Lower leg skin (tissue), 4 donors: ENCODE measurements at regions of chr11 and their contacts with region 1.

Region 1: GRCh38 chr11:93548679-93549319 is 5.6 kb upstream of the SMCO4 start:
- DNase-seq: no peak
- H3K4me3 ChIP-seq: no peak overlapping the region
- CTCF ChIP-seq: no peak
- POLR2A ChIP-seq: no peak

Region 2: DNA sequence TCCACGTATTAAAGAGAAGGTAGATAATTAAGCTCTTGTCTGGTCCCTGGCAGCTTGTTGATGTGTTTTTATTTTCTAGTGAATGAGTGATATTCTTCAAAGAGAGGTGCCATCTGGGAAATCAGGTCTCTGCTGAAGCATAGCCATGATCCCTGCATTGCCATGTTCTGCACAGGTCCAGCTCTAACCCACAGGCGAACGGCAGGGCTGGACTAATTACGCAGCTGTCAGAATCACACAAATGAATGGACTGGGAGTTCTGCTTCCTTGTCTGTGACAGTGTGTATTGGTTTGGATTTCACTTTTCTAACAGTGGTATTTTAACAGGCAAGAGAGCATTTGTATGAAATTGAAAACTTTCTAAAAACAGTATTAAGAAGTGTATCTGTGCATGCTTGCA is 1088.6 kb before region 1 on chr11:
- intact Hi-C with region 1: loop called (anchors 5 kb)
- DNase-seq: no peak
- H3K4me3 ChIP-seq: no peak overlapping the region
- CTCF ChIP-seq: no peak
- POLR2A ChIP-seq: no peak

Region 3: DNA sequence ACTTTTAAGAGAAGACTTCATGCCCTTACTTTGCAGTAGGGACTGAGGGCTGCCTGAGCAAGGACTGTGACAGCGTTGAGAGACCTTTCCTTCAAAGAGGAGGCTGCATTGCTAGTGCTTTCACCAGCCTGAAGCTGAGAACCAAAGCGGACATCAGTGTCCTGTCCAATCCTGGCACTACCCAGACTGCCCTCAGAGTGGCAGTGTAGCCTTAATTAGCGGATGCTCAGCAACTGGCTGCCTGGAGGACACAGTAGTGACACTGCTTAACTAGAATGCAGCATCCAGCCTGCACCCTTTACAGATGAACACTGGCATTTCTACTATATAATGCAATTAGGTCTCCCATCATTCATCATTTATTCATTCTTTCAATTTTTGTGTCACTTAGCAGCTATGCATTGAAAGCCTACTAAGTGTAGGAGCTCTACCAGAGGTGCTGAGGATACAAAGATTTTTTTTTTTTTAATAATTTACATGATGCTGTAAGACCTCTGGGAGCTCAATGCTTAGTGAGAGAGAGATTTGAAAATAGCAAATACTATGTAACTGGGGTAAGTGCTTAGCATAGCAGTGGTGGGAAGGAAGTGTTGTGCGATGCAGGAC is 314.1 kb before region 1 on chr11:
- intact Hi-C with region 1: loop called (anchors 5 kb)
- DNase-seq: peak; percentile 73 to 93
- H3K4me3 ChIP-seq: no peak overlapping the region
- CTCF ChIP-seq: peak in 1 of 3 donors; percentile 63
- POLR2A ChIP-seq: no peak

Region 4: DNA sequence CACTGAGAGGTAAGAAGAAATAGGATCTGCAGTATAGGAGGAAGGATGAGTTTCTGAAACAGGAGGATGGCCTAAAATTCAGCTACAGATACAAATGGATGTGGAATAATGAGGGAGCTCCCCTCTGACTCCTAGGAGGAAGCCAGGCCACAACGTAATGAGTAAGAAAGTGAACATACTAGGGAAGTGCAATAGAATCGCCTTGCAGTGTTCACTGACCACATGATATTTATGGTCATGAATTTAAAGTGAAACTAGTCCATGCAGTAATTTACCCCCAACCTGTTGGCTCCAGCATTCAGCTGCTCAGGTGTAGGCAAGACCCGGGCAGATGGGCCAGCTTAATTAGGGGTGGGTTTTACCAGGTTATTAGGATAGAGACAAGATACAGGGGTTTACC is 116.6 kb before region 1 on chr11:
- intact Hi-C with region 1: no loop called
- DNase-seq: no peak
- H3K4me3 ChIP-seq: no peak overlapping the region
- CTCF ChIP-seq: no peak
- POLR2A ChIP-seq: no peak

Region 5: DNA sequence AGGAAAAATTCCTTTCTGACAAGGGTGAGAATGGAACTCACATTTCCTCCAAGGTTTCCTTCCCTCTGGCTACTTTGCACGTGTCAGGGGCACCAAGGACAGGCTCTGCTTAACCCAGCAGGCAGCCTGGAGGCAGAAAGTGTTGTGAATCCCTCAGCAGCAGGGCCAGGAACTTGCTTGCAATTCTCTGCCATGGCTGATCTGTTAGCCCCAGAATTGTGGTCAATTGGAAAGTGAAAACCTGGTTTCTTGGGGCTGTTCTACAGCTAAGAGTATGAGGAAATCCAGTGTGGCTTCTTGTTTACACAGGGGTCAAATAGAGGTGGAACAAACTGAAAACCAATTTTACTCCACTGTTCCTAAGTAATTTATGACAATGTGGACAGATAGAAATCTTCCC is 74.4 kb after region 1 on chr11:
- intact Hi-C with region 1: no loop called
- DNase-seq: no peak
- H3K4me3 ChIP-seq: no peak overlapping the region
- CTCF ChIP-seq: no peak
- POLR2A ChIP-seq: no peak

Region 6: GRCh38 chr11:93639548-93639947 is 90.7 kb after region 1 on chr11:
- intact Hi-C with region 1: no loop called
- DNase-seq: no peak
- H3K4me3 ChIP-seq: no peak overlapping the region
- CTCF ChIP-seq: no peak
- POLR2A ChIP-seq: no peak